Prostate gland (tissue), 2 donors: ENCODE measurements at regions of chr5 and their contacts with region 1.

Region 1: GRCh38 chr5:61666064-61666621 is 334.1 kb downstream of the ZSWIM6 start:
- DNase-seq: no peak
- H3K4me3 ChIP-seq: no peak overlapping the region
- H3K27ac ChIP-seq: no peak overlapping the region
- H3K4me1 ChIP-seq: no peaks in the 10 kb centered on the region
- H3K27me3 ChIP-seq: no peaks in the 10 kb centered on the region
- CTCF ChIP-seq: no peak
- POLR2A ChIP-seq: no peak

Region 2: GRCh38 chr5:61055434-61056006 is 610.6 kb before region 1 on chr5:
- intact Hi-C with region 1: loop called (anchors 10 kb)
- DNase-seq: no peak
- H3K4me3 ChIP-seq: no peak overlapping the region
- H3K27ac ChIP-seq: no peak overlapping the region
- H3K4me1 ChIP-seq: no peaks in the 10 kb centered on the region
- H3K27me3 ChIP-seq: no peaks in the 10 kb centered on the region
- CTCF ChIP-seq: peak in 3 of 4 experiments; percentile 40 to 66 (median 63)
- POLR2A ChIP-seq: no peak